Aorta (tissue), 5 donors: ENCODE measurements at regions of chr11 and their contacts with region 1.

Region 1: GRCh38 chr11:127843483-127844396 is 743.6 kb downstream of the ETS1 start:
- DNase-seq: peak; percentile 84 to 92
- ATAC-seq: no peak
- H3K4me3 ChIP-seq: no peak overlapping the region
- H3K27ac ChIP-seq: no peak overlapping the region
- H3K4me1 ChIP-seq: no peaks in the 10 kb centered on the region
- H3K27me3 ChIP-seq: no peaks in the 10 kb centered on the region

Region 2: DNA sequence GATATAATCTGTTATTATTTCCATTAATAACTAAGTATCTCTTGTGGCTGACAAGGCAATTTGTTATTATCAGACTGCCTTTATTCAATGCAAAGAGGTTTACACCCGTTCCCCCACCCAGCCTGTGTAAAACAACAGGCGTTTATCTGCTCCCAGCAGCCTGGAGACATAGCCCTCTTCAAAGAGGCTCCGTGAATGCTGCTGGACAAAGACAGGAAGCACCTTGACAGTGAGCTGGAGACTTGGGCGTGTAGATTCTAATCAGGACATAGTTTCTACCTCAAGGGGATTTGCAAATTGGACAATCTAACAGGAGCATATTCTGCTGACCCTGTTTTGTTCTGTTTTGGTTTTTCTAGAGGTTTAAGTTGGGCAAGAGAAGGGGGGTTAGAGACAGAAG is 110.2 kb before region 1 on chr11:
- intact Hi-C with region 1: no loop called
- DNase-seq: no peak
- ATAC-seq: no peak
- H3K4me3 ChIP-seq: no peak overlapping the region
- H3K27ac ChIP-seq: no peak overlapping the region
- H3K4me1 ChIP-seq: no peaks in the 10 kb centered on the region
- H3K27me3 ChIP-seq: no peaks in the 10 kb centered on the region

Region 3: GRCh38 chr11:127993788-127994187 is 150.0 kb after region 1 on chr11:
- intact Hi-C with region 1: loop called in 1 of 2 experiments (anchors 10 kb)
- DNase-seq: no peak
- ATAC-seq: peak; percentile 51
- H3K4me3 ChIP-seq: no peak overlapping the region
- H3K27ac ChIP-seq: no peak overlapping the region
- H3K4me1 ChIP-seq: no peaks in the 10 kb centered on the region
- H3K27me3 ChIP-seq: no peaks in the 10 kb centered on the region

Region 4: GRCh38 chr11:128021349-128022006 is 177.7 kb after region 1 on chr11:
- intact Hi-C with region 1: loop called in 1 of 2 experiments (anchors 2 kb)
- DNase-seq: no peak
- ATAC-seq: no peak
- H3K4me3 ChIP-seq: no peak overlapping the region
- H3K27ac ChIP-seq: no peak overlapping the region
- H3K4me1 ChIP-seq: no peaks in the 10 kb centered on the region
- H3K27me3 ChIP-seq: no peaks in the 10 kb centered on the region